Activated CD4-positive, alpha-beta T cell treated with anti-CD3 and anti-CD28 coated beads for 36 hours (primary cell): ENCODE measurements at regions of chr17 and their contacts with region 1.

Region 1: GRCh38 chr17:47802341-47803022 is 19.1 kb downstream of the OSBPL7 start:
- DNase-seq: peak; percentile 81
- ATAC-seq: peak; percentile 98
- H3K4me3 Mint-ChIP-seq: no peak overlapping the region
- H3K27ac Mint-ChIP-seq: no peak overlapping the region
- H3K4me1 Mint-ChIP-seq: no peaks in the 10 kb centered on the region
- H3K27me3 Mint-ChIP-seq: peaks cover 2% of the 10 kb centered on the region

Region 2: DNA sequence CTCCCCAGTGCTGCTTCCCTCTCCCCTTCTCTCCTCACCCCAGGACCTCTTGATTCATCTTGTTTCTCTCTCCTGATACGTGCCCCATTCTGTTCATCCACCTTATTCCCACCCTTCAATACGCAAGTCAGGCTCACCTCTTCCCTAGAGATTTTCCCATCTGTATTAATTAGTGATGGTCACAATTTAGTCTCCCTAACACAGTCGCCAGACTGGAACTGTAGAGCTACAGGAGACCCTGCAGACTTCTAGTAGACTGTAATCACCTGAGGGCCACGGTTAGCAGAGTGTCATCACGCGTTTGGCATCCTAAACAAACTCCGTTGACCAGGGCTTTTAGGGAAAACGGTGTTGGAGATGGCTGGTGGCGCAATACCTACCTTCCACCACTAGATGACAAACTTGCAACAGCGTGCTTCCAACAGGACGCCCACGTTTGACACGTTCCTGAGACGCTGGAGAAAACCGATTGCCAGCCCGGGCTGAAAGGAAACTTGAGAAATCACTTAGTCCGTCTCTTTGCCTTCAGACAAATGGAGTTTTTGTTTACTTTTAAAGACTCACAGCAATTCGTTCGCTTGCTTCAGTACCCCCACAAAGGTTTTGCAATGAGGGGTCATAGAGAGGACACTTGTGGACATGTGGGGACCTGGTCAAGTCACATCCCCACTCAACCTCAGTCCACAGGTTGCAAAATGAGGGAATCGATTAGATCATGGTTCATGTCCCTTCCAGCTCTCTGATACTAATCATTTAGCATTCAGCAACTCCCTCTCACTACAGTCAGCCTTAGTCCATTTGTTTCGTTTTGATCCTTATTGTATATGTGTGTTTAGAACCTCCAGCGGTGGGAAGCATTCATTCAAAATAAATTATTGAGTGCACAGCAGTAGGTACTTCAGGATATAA is 572.7 kb before region 1 on chr17:
- CTCF ChIA-PET with region 1: no interaction called
- POLR2A ChIA-PET with region 1: no interaction called
- intact Hi-C with region 1: loop called in 1 of 2 experiments (anchors 5 kb)
- DNase-seq: peak; percentile 90
- ATAC-seq: peak; percentile 94
- H3K4me3 Mint-ChIP-seq: peak overlapping the region; percentile 43
- H3K27ac Mint-ChIP-seq: peak overlapping the region; percentile 17
- H3K4me1 Mint-ChIP-seq: peaks cover 9% of the 10 kb centered on the region
- H3K27me3 Mint-ChIP-seq: peaks cover 5% of the 10 kb centered on the region

Region 3: DNA sequence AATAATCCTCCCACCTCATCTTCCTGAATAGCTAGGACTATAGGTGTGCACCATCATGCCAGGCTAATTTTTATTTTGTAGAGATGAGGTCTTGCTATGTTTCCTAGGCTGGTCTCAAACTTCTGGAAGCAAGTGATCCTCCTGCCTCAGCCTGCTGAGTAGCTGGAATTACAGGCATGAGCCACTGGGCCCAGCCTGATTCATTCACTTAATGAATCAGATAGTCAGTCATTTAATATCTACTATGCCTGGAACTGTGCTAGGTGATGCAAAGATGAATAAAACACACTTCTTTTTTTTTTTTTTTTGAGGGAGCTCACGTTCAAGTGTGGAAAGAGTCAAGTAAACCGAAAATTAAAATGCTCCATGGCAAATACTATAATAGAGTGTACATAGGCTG is 439.3 kb before region 1 on chr17:
- CTCF ChIA-PET with region 1: no interaction called
- POLR2A ChIA-PET with region 1: no interaction called
- intact Hi-C with region 1: loop called in 1 of 2 experiments (anchors 5 kb)
- DNase-seq: no peak
- ATAC-seq: no peak
- H3K4me3 Mint-ChIP-seq: no peak overlapping the region
- H3K27ac Mint-ChIP-seq: no peak overlapping the region
- H3K4me1 Mint-ChIP-seq: no peaks in the 10 kb centered on the region
- H3K27me3 Mint-ChIP-seq: no peaks in the 10 kb centered on the region

Region 4: DNA sequence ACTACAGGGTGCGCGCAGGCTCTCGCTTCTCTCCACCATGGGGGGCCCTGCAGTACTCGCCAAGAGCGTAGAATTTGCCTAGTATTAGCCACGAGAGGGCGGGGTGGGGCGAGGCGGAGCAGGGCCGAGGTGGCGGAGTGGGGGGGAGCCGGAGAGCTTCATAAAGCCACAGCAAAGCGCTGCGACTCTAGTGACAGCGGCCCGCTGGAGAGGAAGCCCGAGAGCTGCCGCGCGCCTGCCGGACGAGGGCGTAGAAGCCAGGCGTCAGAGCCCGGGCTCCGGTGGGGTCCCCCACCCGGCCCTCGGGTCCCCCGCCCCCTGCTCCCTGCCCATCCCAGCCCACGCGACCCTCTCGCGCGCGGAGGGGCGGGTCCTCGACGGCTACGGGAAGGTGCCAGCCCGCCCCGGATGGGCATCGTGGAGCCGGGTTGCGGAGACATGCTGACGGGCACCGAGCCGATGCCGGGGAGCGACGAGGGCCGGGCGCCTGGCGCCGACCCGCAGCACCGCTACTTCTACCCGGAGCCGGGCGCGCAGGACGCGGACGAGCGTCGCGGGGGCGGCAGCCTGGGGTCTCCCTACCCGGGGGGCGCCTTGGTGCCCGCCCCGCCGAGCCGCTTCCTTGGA is 69.3 kb before region 1 on chr17 and contains the start of gene TBX21:
- CTCF ChIA-PET with region 1: interaction called, 3 read pairs
- POLR2A ChIA-PET with region 1: no interaction called
- intact Hi-C with region 1: loop called in 1 of 2 experiments (anchors 5 kb)
- DNase-seq: peak; percentile 96
- ATAC-seq: peak; percentile 80
- H3K4me3 Mint-ChIP-seq: peak within 1 kb of the TSS; percentile 93
- H3K27ac Mint-ChIP-seq: peak within 1 kb of the TSS; percentile 98
- H3K4me1 Mint-ChIP-seq: peaks cover 63% of the 10 kb centered on the region
- H3K27me3 Mint-ChIP-seq: no peaks in the 10 kb centered on the region
- total RNA-seq, gene TBX21: 73.4 to 76.8 TPM

Region 5: GRCh38 chr17:47776330-47777197 is 25.9 kb before region 1 on chr17:
- CTCF ChIA-PET with region 1: interaction called, 6 read pairs
- POLR2A ChIA-PET with region 1: no interaction called
- intact Hi-C with region 1: loop called (anchors 1 kb)
- DNase-seq: peak; percentile 54
- ATAC-seq: peak; percentile 94
- H3K4me3 Mint-ChIP-seq: no peak overlapping the region
- H3K27ac Mint-ChIP-seq: no peak overlapping the region
- H3K4me1 Mint-ChIP-seq: no peaks in the 10 kb centered on the region
- H3K27me3 Mint-ChIP-seq: peaks cover 33% of the 10 kb centered on the region

Region 6: DNA sequence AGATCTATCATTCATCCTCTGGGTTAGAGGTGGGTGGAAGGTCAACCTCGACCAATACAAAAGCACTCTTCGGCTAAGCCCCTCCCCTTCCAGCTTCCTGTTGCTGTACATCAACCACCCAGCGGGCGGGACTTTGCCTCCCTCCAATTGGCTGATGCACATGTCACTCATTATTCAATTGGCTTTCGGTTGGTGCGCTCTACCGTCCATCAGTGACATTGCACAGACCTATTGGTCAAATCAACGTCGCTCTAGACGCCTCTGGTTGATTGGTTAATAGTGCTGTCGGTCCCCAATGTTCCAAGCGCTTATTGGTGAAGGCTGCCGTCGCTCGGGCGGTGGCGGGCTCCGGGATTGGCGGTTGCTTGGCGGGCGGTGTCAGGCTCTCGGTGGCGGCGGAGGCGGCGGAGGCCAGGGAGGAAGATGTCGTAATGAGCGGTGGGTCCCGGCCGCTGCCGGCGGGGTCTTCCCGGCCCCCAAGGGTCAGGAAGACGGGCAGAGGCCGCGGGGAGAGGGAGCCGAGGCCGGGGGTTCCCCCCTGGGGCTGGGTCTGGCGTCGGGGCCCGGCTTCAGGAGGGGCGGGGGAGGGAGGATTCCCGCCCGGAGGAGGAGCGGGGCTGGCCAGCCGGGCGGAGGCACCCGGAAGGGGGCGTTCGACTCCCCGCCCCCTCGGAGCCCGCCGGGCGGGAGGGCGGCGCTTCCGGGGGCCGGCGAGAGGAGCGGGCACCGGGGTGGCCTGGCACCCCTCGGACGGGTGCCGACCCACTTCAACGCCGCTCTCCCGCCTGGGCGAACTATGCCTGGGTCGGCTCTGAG is 93.6 kb after region 1 on chr17 and contains the start of gene SP2:
- CTCF ChIA-PET with region 1: no interaction called
- POLR2A ChIA-PET with region 1: no interaction called
- intact Hi-C with region 1: no loop called
- DNase-seq: peak; percentile 99
- ATAC-seq: peak; percentile 94
- H3K4me3 Mint-ChIP-seq: peak within 1 kb of the TSS; percentile 96
- H3K27ac Mint-ChIP-seq: peak within 1 kb of the TSS; percentile 96
- H3K4me1 Mint-ChIP-seq: peaks cover 46% of the 10 kb centered on the region
- H3K27me3 Mint-ChIP-seq: no peaks in the 10 kb centered on the region
- total RNA-seq, gene SP2: 15.7 to 19.8 TPM

Region 7: GRCh38 chr17:48054238-48055185 is 252.0 kb after region 1 on chr17:
- CTCF ChIA-PET with region 1: no interaction called
- POLR2A ChIA-PET with region 1: no interaction called
- intact Hi-C with region 1: no loop called
- DNase-seq: no peak
- ATAC-seq: no peak
- H3K4me3 Mint-ChIP-seq: peak overlapping the region; percentile 48
- H3K27ac Mint-ChIP-seq: peak overlapping the region; percentile 99
- H3K4me1 Mint-ChIP-seq: peaks cover 62% of the 10 kb centered on the region
- H3K27me3 Mint-ChIP-seq: no peaks in the 10 kb centered on the region